ENCODE measurements at regions of chr12 and their contacts with region 1.

Region 1: GRCh38 chr12:123232807-123233543 is at the starts of genes MPHOSPH9 and MTRFR:
- DNase-seq: peak; percentile 94 to 100 (median 100)
- ATAC-seq: peak; percentile 97
- H3K4me3 ChIP-seq: peak within 1 kb of the TSS; percentile 97
- H3K4me3 Mint-ChIP-seq: peak within 1 kb of the TSS; percentile 93 to 100 (median 98)
- H3K27ac ChIP-seq: peak within 1 kb of the TSS; percentile 95
- H3K27ac Mint-ChIP-seq: peak within 1 kb of the TSS; percentile 96 to 99 (median 99)
- H3K4me1 ChIP-seq: peaks cover 31 to 41% of the 10 kb centered on the region in 2 donors
- H3K4me1 Mint-ChIP-seq: peaks cover 43 to 88% (median 65%) of the 10 kb centered on the region in 7 donors
- H3K27me3 ChIP-seq: no peaks in the 10 kb centered on the region
- H3K27me3 Mint-ChIP-seq: peaks cover 0 to 4% (median 0%) of the 10 kb centered on the region in 5 donors
- total RNA-seq, gene MPHOSPH9: 71.0 to 102 (median 82.4) TPM
- total RNA-seq, gene MTRFR: 26.8 to 56.9 (median 39.5) TPM

Region 2: GRCh38 chr12:122526683-122527477 is 706.1 kb before region 1 on chr12 and contains the starts of genes KNTC1 and RSRC2:
- CTCF ChIA-PET with region 1: no interaction called
- POLR2A ChIA-PET with region 1: interaction called, 6 read pairs
- intact Hi-C with region 1: loop called in 1 of 2 experiments (anchors 2 kb)
- DNase-seq: peak; percentile 87 to 99 (median 99)
- ATAC-seq: peak; percentile 96
- H3K4me3 ChIP-seq: peak within 1 kb of the TSS; percentile 86
- H3K4me3 Mint-ChIP-seq: no peak within 1 kb of the TSS
- H3K27ac ChIP-seq: peak within 1 kb of the TSS; percentile 94
- H3K27ac Mint-ChIP-seq: peak within 1 kb of the TSS in 1 of 9 donors; percentile 68
- H3K4me1 ChIP-seq: peaks cover 30 to 37% of the 10 kb centered on the region in 2 donors
- H3K4me1 Mint-ChIP-seq: peaks cover 24 to 41% (median 36%) of the 10 kb centered on the region in 7 donors
- H3K27me3 ChIP-seq: no peaks in the 10 kb centered on the region
- H3K27me3 Mint-ChIP-seq: no peaks in the 10 kb centered on the region
- total RNA-seq, gene KNTC1: 24.5 to 102 (median 31.0) TPM
- total RNA-seq, gene RSRC2: 89.7 to 249 (median 139) TPM

Region 3: DNA sequence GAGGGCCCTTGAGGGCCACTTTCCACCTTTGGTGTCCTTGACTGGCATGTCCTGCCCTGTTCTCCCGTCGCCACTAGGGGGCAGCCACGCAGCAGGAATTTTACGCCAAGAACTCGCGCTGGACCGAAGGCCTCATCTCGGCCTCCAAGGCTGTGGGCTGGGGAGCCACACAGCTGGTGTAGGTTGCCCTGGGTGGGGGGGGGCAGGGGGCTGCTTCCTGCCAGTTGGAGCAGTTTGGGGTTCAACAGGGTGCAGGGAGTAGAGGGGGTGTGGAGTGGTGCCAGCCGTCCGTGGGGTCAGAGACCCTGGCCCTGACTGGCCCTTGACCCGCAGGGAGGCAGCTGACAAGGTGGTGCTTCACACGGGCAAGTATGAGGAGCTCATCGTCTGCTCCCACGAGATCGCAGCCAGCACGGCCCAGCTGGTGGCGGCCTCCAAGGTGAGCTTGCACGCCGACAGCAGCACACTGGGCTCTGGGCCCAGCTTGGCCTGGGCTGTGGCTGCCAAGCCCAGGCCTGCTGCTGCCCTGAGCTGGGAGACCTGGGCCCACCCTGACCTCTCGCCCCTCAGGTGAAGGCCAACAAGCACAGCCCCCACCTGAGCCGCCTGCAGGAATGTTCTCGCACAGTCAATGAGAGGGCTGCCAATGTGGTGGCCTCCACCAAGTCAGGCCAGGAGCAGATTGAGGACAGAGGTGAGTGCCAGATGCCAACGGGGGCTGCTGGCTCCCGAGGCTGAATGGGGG is 372.5 kb before region 1 on chr12:
- CTCF ChIA-PET with region 1: interaction called, 3 read pairs
- POLR2A ChIA-PET with region 1: no interaction called
- intact Hi-C with region 1: loop called in 1 of 2 experiments (anchors 1 kb)
- DNase-seq: peak; percentile 65 to 83 (median 75)
- ATAC-seq: peak; percentile 70
- H3K4me3 ChIP-seq: no peak overlapping the region
- H3K4me3 Mint-ChIP-seq: no peak overlapping the region
- H3K27ac ChIP-seq: no peak overlapping the region
- H3K27ac Mint-ChIP-seq: peak overlapping the region in 4 of 9 donors; percentile 33 to 65 (median 59)
- H3K4me1 ChIP-seq: no peaks in the 10 kb centered on the region
- H3K4me1 Mint-ChIP-seq: peaks cover 0 to 8% (median 0%) of the 10 kb centered on the region in 7 donors
- H3K27me3 ChIP-seq: no peaks in the 10 kb centered on the region
- H3K27me3 Mint-ChIP-seq: no peaks in the 10 kb centered on the region

Region 4: DNA sequence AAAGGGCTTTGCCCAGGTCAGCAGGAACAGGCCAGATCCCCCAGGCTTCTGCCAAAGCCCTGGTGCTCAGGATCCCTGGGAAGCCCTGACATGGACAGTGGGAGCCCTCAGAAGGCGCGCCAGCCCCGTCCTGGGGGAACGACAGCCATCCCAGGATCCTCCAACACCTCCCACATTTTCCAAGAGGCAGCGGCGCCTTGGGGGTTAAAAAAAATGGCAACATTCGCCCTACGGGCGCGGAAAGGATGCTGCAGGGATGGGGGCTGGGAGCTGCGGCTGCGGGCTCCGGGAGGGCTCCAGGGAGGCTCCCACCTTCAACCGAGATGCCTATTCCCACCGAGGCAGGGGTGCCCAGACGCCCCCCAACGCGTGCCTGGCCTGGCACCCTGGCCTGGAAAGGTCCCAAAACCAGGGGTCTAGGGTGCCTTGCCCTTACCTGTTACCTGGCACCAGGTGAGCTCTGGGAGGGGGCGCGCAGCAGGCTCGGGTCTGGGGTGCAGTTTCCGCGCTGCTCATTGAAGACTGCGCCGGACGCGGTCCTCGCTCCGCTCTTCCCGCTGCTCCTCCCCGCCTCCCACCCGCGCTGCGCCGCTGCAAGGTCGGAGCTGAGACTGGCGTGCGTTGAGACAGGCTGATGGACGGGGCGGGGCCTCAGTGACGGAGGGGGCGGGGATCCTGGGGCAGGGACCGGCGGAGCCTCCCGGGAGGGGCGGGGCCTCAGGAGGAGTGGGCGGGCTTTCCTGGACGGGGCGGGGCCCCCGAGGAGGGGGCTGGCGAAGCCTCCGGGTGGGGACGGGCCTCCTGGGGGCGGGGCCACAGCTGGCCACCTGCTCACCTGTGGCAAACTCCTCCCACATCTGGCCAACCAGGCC is 266.9 kb before region 1 on chr12 and contains the start of gene ABCB9:
- CTCF ChIA-PET with region 1: no interaction called
- POLR2A ChIA-PET with region 1: interaction called, 9 read pairs
- intact Hi-C with region 1: loop called in 1 of 2 experiments (anchors 2 kb)
- DNase-seq: peak; percentile 78 to 95 (median 85)
- ATAC-seq: peak; percentile 99
- H3K4me3 ChIP-seq: peak within 1 kb of the TSS; percentile 80
- H3K4me3 Mint-ChIP-seq: peak within 1 kb of the TSS; percentile 47 to 84 (median 76)
- H3K27ac ChIP-seq: peak within 1 kb of the TSS; percentile 67
- H3K27ac Mint-ChIP-seq: peak within 1 kb of the TSS in 8 of 9 donors; percentile 22 to 90 (median 70)
- H3K4me1 ChIP-seq: peaks cover 10 to 15% of the 10 kb centered on the region in 2 donors
- H3K4me1 Mint-ChIP-seq: peaks cover 5 to 20% (median 12%) of the 10 kb centered on the region in 7 donors
- H3K27me3 ChIP-seq: no peaks in the 10 kb centered on the region
- H3K27me3 Mint-ChIP-seq: no peaks in the 10 kb centered on the region
- total RNA-seq, gene ABCB9: 6.2 to 8.9 (median 7.1) TPM

Region 5: GRCh38 chr12:123075646-123076171 is 157.3 kb before region 1 on chr12:
- CTCF ChIA-PET with region 1: interaction called, 19 read pairs
- POLR2A ChIA-PET with region 1: interaction called, 20 read pairs
- intact Hi-C with region 1: loop called (anchors 1 to 2 kb)
- DNase-seq: peak; percentile 45 to 88 (median 81)
- ATAC-seq: peak; percentile 91
- H3K4me3 ChIP-seq: peak overlapping the region; percentile 65
- H3K4me3 Mint-ChIP-seq: peak overlapping the region; percentile 88 to 97 (median 92)
- H3K27ac ChIP-seq: peak overlapping the region; percentile 74
- H3K27ac Mint-ChIP-seq: peak overlapping the region; percentile 92 to 99 (median 97)
- H3K4me1 ChIP-seq: peaks cover 23 to 30% of the 10 kb centered on the region in 2 donors
- H3K4me1 Mint-ChIP-seq: peaks cover 45 to 82% (median 71%) of the 10 kb centered on the region in 7 donors
- H3K27me3 ChIP-seq: no peaks in the 10 kb centered on the region
- H3K27me3 Mint-ChIP-seq: no peaks in the 10 kb centered on the region

Region 6: GRCh38 chr12:123200414-123200813 is 32.6 kb before region 1 on chr12:
- CTCF ChIA-PET with region 1: interaction called, 4 read pairs
- POLR2A ChIA-PET with region 1: interaction called, 46 read pairs
- intact Hi-C with region 1: loop called (anchors 1 to 5 kb)
- DNase-seq: peak in 7 of 9 donors; percentile 6 to 33 (median 25)
- ATAC-seq: peak; percentile 22
- H3K4me3 ChIP-seq: no peak overlapping the region
- H3K4me3 Mint-ChIP-seq: peak overlapping the region in 8 of 10 donors; percentile 3 to 57 (median 38)
- H3K27ac ChIP-seq: peak overlapping the region; percentile 36
- H3K27ac Mint-ChIP-seq: peak overlapping the region; percentile 78 to 93 (median 89)
- H3K4me1 ChIP-seq: peaks cover 0 to 13% of the 10 kb centered on the region in 2 donors
- H3K4me1 Mint-ChIP-seq: peaks cover 10 to 27% (median 18%) of the 10 kb centered on the region in 7 donors
- H3K27me3 ChIP-seq: no peaks in the 10 kb centered on the region
- H3K27me3 Mint-ChIP-seq: no peaks in the 10 kb centered on the region

Region 7: DNA sequence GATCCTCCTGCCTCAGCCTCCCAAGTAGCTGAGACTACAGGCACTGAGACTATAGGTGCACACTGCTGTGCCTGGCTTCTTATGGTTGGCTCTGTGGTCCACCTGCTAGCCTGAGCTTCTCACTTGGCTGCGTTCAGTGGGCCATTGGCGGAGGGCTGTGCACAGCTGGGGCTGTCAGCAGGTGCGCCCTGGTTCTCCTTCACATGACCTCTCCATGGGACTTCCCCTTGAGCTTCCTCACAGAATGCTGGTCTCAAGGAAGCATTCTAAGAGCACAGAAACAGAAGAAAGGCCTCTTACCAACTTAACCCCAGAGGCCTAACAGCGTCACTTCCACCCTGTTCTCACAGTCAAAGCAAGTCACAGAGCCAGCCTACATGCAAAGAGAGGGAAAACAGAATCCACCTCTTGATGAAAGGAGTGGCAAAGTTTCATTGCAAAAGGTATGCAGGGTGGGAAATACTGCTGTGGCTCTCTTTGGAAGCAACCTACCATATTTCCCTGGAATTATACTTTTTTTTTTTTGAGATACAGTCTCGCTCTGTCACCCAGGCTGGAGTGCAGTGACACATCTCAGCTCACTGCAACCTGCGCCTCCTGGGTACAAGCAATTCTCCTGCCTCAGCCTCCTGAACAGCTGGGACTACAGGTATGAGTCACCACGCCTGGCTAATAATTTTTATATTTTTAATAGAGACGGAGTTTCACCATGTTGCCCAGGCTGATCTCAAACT is 194.2 kb after region 1 on chr12:
- CTCF ChIA-PET with region 1: no interaction called
- POLR2A ChIA-PET with region 1: no interaction called
- intact Hi-C with region 1: no loop called
- DNase-seq: peak in 2 of 9 donors; percentile 8 to 30
- ATAC-seq: peak; percentile 85
- H3K4me3 ChIP-seq: no peak overlapping the region
- H3K4me3 Mint-ChIP-seq: peak overlapping the region in 1 of 10 donors; percentile 1
- H3K27ac ChIP-seq: peak overlapping the region; percentile 41
- H3K27ac Mint-ChIP-seq: peak overlapping the region in 6 of 9 donors; percentile 32 to 86 (median 43)
- H3K4me1 ChIP-seq: peaks cover 0 to 24% of the 10 kb centered on the region in 2 donors
- H3K4me1 Mint-ChIP-seq: peaks cover 0 to 27% (median 16%) of the 10 kb centered on the region in 7 donors
- H3K27me3 ChIP-seq: no peaks in the 10 kb centered on the region
- H3K27me3 Mint-ChIP-seq: no peaks in the 10 kb centered on the region

Region 8: GRCh38 chr12:123457980-123458783 is 225.2 kb after region 1 on chr12 and contains the start of gene SNRNP35:
- CTCF ChIA-PET with region 1: no interaction called
- POLR2A ChIA-PET with region 1: interaction called, 10 read pairs
- intact Hi-C with region 1: loop called in 1 of 2 experiments (anchors 1 kb)
- DNase-seq: peak; percentile 79 to 92 (median 88)
- ATAC-seq: peak; percentile 85
- H3K4me3 ChIP-seq: peak within 1 kb of the TSS; percentile 97
- H3K4me3 Mint-ChIP-seq: peak within 1 kb of the TSS; percentile 92 to 100 (median 99)
- H3K27ac ChIP-seq: peak within 1 kb of the TSS; percentile 99
- H3K27ac Mint-ChIP-seq: peak within 1 kb of the TSS; percentile 100
- H3K4me1 ChIP-seq: peaks cover 14 to 18% of the 10 kb centered on the region in 2 donors
- H3K4me1 Mint-ChIP-seq: peaks cover 21 to 45% (median 26%) of the 10 kb centered on the region in 7 donors
- H3K27me3 ChIP-seq: no peaks in the 10 kb centered on the region
- H3K27me3 Mint-ChIP-seq: no peaks in the 10 kb centered on the region
- total RNA-seq, gene SNRNP35: 30.2 to 53.4 (median 35.8) TPM